ENCODE measurements at regions of chr15 and their contacts with region 1.

Region 1: DNA sequence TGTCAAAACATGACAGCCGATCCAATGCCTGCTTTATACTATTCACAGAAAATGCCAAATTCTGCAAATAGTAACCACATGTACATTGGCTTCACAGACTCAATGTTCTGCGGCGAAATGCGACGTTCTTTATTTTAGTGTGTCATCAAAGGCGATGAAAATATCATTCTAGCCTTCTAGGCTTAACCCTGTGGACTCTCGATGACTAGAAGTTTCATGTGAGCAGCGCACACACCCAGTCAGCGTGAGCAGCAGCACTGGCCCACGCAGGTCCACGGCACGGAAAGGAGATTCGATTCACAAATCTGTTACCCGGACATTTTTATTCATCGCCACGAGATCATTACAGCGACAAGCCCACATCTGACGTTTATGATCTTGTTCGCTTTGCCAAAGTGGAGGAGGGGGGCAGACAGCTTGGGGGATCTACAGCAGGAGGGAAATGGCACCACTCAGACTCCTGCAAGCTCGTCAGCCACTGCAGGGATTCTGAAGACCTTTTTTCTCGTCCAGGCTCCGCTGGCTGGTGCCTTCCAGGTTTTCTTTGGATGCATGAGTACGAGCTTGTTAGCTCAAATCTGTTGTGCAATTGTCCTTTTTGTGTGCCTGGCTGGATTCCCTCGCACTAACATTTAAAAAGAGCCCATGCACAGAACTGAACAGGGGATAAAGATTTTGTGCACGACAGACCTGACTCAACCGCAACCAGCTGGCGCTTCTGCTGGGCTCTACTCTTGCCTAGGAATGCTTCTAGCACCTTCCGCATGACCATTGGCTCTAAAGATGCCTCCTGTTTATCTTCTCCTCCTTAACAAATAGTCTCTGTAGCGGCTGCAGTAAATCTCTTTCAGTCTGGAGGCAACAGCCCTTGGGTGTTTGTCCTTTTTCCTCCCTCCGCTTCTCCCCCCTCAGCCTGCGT is 938.4 kb downstream of the MCTP2 start:
- DNase-seq: no peak
- H3K4me3 ChIP-seq: peak overlapping the region in 1 of 8 donors; percentile 8
- H3K27ac ChIP-seq: peak overlapping the region in 7 of 8 donors; percentile 40 to 76 (median 63)
- H3K4me1 ChIP-seq: peaks cover 0 to 9% (median 0%) of the 10 kb centered on the region in 6 donors
- H3K27me3 ChIP-seq: no peaks in the 10 kb centered on the region
- CTCF ChIP-seq: no peak
- POLR2A ChIP-seq: no peak

Region 2: DNA sequence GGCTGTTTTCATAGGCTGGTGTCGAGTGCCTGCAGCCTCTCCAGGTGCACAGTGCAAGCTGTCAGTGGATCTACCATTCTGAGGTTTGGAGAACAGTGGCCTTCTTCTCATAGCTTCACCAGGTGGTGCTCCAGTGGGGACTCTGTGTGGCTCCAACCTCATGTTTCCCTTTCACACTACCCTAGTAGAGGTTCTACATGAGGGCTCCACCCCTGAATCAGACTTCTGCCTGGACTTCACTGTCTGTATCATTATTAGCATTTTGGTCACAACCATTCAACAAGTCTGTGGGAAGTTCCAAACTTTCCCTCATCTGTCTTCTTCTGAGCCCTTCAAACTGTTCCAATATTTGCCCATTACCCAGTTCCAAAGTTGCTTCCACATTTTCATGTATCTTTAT is 65.2 kb after region 1 on chr15:
- intact Hi-C with region 1: loop called (anchors 10 kb)
- DNase-seq: no peak
- H3K4me3 ChIP-seq: no peak overlapping the region
- H3K27ac ChIP-seq: no peak overlapping the region
- H3K4me1 ChIP-seq: no peaks in the 10 kb centered on the region
- H3K27me3 ChIP-seq: no peaks in the 10 kb centered on the region
- CTCF ChIP-seq: no peak
- POLR2A ChIP-seq: no peak

Region 3: DNA sequence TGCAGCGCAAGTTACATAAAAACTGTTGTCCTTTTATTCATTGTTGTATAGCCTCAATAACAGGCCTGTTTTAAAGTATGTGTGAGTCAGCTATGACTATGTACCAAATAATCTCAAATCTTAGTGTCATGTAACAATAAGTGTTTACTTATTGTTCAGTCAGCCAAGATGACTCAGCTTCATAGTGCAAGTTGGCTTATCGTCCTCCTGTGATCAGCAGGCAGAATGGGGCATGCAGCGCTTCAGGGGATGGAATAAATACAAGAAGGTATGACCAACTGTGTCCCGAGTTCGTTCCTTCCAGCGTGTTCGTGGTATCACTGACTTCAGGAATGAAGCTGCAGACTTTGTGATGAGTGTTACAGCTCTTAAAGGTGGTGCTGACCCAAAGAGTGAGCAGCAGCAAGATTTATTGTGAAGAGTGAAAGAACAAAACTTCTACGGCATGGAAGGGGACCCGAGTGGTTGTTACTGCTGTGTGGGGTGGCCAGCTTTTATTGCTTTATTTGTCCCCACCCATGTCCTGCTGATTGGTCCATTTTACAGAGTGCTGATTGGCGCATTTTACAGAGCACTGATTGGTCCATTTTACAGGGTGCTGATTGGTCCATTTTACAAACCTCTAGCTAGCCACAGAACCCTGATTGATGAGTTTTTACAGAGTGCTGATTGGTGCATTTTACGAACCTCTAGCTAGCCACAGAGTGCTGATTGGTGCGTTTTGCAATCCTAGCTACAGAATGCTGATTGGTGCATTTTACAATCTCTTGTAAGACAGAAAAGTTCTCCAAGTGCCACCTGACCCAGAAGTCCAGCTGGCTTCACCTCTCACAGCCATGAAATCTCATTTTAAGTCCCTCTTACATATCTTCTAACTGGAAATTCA is 77.5 kb after region 1 on chr15:
- intact Hi-C with region 1: no loop called
- DNase-seq: no peak
- H3K4me3 ChIP-seq: no peak overlapping the region
- H3K27ac ChIP-seq: no peak overlapping the region
- H3K4me1 ChIP-seq: no peaks in the 10 kb centered on the region
- H3K27me3 ChIP-seq: no peaks in the 10 kb centered on the region
- CTCF ChIP-seq: no peak
- POLR2A ChIP-seq: no peak